IMR-90 (cell line): ENCODE measurements at regions of chr6 and their contacts with region 1.

Region 1: DNA sequence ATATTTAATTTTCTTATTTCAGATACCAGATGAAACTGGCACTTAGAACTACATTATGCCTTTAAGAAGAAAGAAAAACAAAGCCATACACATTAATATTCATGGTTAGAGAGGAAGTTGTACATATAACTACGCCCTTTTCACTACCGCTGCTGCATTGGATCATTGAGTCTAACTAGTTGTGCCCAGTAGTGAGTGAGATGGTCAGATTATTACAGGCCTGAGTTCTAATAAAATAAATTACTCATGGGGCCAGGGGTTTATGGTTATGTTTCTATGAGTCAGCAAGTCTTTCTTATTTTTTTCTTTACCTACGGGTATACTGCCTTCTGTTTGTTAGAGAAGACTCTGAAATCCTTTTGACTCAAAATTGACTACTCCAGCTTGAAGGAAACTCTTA is 11.5 kb downstream of the RIOK1 start:
- DNase-seq: peak; percentile 25
- ATAC-seq: no peak
- H3K4me3 ChIP-seq: no peak overlapping the region
- H3K27ac ChIP-seq: no peak overlapping the region
- H3K4me1 ChIP-seq: no peaks in the 10 kb centered on the region
- H3K27me3 ChIP-seq: no peaks in the 10 kb centered on the region
- CTCF ChIP-seq: no peak
- POLR2A ChIP-seq: no peak
- RAD21 ChIP-seq: no peak

Region 2: DNA sequence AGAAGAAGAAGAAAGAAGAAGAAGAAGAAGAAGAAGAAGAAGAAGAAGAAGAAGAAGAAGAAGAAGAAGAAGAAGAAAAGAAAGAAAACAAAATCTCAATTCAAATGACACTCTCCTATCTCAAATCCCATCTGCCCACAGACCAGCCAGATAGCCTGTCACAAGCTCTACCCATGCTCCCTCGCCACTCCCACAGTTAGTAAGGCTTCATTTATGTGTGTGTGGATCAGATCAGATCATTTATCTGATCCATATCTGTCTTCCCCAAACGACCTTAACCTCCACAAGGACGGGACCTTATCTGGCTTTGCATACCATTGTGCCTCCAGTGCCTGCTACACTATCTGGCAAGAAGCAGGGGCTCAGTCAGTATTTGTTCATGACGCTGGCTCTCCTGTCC is 375.2 kb before region 1 on chr6:
- CTCF ChIA-PET with region 1: no interaction called
- POLR2A ChIA-PET with region 1: no interaction called
- dilution Hi-C with region 1: no loop called
- in situ Hi-C with region 1: no loop called
- intact Hi-C with region 1: no loop called
- DNase-seq: no peak
- ATAC-seq: no peak
- H3K4me3 ChIP-seq: no peak overlapping the region
- H3K27ac ChIP-seq: no peak overlapping the region
- H3K4me1 ChIP-seq: no peaks in the 10 kb centered on the region
- H3K27me3 ChIP-seq: peaks cover 3% of the 10 kb centered on the region
- CTCF ChIP-seq: no peak
- POLR2A ChIP-seq: no peak
- RAD21 ChIP-seq: no peak

Region 3: DNA sequence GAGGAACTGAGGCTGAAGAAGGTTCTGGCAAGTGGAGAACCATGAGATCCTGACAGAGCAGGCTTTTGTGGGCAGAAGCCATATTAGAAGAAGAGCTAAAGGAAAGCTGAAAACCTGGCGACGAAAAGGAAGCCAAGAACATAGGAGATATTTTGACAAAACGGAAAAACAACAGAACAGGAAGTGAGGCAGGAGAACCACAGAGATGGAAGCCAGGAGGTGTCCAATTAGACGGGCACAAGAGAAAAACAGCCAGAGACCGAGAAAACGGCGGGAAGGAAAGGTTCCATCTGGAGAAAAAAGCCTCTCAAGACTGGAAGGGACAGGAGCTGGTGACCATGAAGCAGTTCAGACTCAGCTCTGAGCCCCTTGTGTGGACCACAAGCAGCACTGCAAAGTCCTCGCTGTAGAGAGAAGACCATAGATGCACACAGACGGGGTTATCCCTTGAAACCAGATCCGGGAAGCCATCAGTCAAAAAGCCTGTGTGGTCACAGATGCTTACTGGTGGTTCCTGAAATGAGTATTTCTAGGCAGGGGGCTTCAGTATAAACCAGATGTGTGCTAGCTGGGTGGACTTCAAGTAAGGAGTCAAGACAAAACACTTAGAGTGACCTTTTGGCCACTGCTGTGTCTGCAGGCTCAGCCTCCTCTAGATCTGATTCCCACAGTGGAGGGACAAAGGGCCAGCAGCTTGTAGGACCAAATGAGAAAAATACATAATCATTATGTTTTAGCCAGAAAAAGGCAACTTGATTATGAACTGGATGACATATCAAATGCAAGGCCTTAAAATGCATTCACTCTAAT is 118.8 kb before region 1 on chr6:
- CTCF ChIA-PET with region 1: no interaction called
- POLR2A ChIA-PET with region 1: no interaction called
- dilution Hi-C with region 1: no loop called
- in situ Hi-C with region 1: loop called (anchors 10 kb)
- intact Hi-C with region 1: no loop called
- DNase-seq: no peak
- ATAC-seq: no peak
- H3K4me3 ChIP-seq: no peak overlapping the region
- H3K27ac ChIP-seq: no peak overlapping the region
- H3K4me1 ChIP-seq: no peaks in the 10 kb centered on the region
- H3K27me3 ChIP-seq: no peaks in the 10 kb centered on the region
- CTCF ChIP-seq: no peak
- POLR2A ChIP-seq: no peak
- RAD21 ChIP-seq: no peak

Region 4: GRCh38 chr6:7442467-7442866 is 41.4 kb after region 1 on chr6:
- CTCF ChIA-PET with region 1: no interaction called
- POLR2A ChIA-PET with region 1: no interaction called
- dilution Hi-C with region 1: no loop called
- in situ Hi-C with region 1: no loop called
- intact Hi-C with region 1: no loop called
- DNase-seq: no peak
- ATAC-seq: no peak
- H3K4me3 ChIP-seq: no peak overlapping the region
- H3K27ac ChIP-seq: no peak overlapping the region
- H3K4me1 ChIP-seq: peaks cover 2% of the 10 kb centered on the region
- H3K27me3 ChIP-seq: no peaks in the 10 kb centered on the region
- CTCF ChIP-seq: no peak
- POLR2A ChIP-seq: no peak
- RAD21 ChIP-seq: no peak

Region 5: GRCh38 chr6:7550433-7550801 is 149.3 kb after region 1 on chr6:
- CTCF ChIA-PET with region 1: interaction called, 10 read pairs
- POLR2A ChIA-PET with region 1: no interaction called
- dilution Hi-C with region 1: no loop called
- in situ Hi-C with region 1: no loop called
- intact Hi-C with region 1: no loop called
- DNase-seq: no peak
- ATAC-seq: no peak
- H3K4me3 ChIP-seq: no peak overlapping the region
- H3K27ac ChIP-seq: no peak overlapping the region
- H3K4me1 ChIP-seq: peaks cover 5% of the 10 kb centered on the region; the same call in 1 of the 2 replicates
- H3K27me3 ChIP-seq: no peaks in the 10 kb centered on the region
- CTCF ChIP-seq: no peak
- POLR2A ChIP-seq: no peak
- RAD21 ChIP-seq: no peak